ENCODE measurements at regions of chr4 and their contacts with region 1.

Region 1: GRCh38 chr4:174365018-174365587 is 81.4 kb downstream of the CEP44 start:
- DNase-seq: no peak

Region 2: DNA sequence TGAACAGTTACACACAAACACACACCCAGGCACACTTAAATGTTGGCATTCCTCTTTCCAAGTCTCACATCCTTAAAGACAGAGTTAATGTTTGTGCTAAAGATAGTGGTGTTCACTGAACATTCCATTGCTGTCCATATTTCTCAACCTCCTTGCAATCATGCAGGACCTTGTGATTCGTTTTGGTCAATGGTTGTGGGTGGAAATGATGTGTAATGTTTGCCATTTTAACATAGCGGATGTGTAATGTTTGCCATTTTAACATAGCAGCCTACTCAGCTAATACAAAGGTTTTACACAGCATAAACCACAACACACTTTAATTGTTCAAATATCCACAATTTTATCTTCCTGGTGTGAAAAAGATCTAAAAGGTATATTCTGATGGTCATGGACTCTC is 12.5 kb after region 1 on chr4:
- intact Hi-C with region 1: no loop called
- DNase-seq: no peak

Region 3: DNA sequence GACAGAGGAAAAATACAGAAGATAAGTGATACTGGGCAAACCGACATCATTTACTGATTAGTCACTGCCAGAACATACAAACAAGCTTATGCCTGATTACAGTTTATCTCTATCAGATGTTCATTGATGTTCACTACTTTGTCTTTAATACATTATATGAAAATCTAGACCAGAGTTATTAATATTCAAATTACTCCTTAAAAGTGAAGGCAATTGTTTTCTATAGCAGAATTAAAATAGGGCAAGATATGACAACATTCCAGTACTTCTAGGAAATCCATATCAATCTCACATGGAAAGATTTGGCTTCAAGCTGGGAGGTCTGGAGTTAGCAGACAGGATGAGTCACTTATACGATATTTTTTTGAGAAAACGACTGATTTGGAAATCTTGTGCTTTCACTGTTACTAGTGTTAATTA is 125.4 kb after region 1 on chr4:
- intact Hi-C with region 1: no loop called
- DNase-seq: no peak

Region 4: GRCh38 chr4:174631901-174632758 is 267.0 kb after region 1 on chr4:
- intact Hi-C with region 1: loop called (anchors 2 kb)
- DNase-seq: no peak

Region 5: GRCh38 chr4:174714393-174715211 is 349.5 kb after region 1 on chr4:
- intact Hi-C with region 1: loop called (anchors 5 kb)
- DNase-seq: peak in 2 of 10 donors; percentile 4 to 5

Region 6: GRCh38 chr4:175536852-175537453 is 1171.8 kb after region 1 on chr4:
- intact Hi-C with region 1: loop called (anchors 1 kb)
- DNase-seq: no peak